ENCODE measurements at regions of chr2 and their contacts with region 1.

Region 1: GRCh38 chr2:17719562-17720371 is 33.8 kb downstream of the SMC6 start:
- DNase-seq: no peak
- ATAC-seq: peak in 2 of 4 donors; percentile 53 to 57
- H3K4me3 ChIP-seq: no peak overlapping the region
- H3K27ac ChIP-seq: no peak overlapping the region
- H3K4me1 ChIP-seq: no peaks in the 10 kb centered on the region
- H3K27me3 ChIP-seq: no peaks in the 10 kb centered on the region
- CTCF ChIP-seq: peak; percentile 36 to 81 (median 70)

Region 2: DNA sequence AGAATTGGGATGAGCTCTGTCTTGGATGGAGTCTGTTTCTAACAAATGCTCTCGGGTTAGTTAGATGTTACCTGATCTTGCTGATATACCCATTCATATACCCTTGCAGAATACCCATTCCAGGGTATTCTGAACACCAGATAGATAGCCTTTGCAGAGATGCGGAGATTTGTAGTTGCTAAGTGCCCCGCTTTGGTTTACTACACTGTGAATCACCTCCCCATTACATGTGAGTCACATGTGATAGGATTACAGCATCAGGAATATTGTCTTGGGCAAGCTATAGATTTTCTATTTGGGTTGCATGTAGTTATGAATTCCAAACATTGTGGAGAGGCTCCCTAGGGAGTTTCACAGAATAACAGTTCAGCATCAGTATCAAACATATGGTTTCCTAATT is 175.5 kb before region 1 on chr2:
- intact Hi-C with region 1: no loop called
- DNase-seq: no peak
- ATAC-seq: no peak
- H3K4me3 ChIP-seq: no peak overlapping the region
- H3K27ac ChIP-seq: no peak overlapping the region
- H3K4me1 ChIP-seq: peaks cover 0 to 3% (median 0%) of the 10 kb centered on the region in 3 donors
- H3K27me3 ChIP-seq: no peaks in the 10 kb centered on the region
- CTCF ChIP-seq: no peak

Region 3: GRCh38 chr2:17830053-17831034 is 110.6 kb after region 1 on chr2:
- intact Hi-C with region 1: loop called in 1 of 3 experiments (anchors 10 kb)
- DNase-seq: peak; percentile 31 to 88 (median 66)
- ATAC-seq: peak; percentile 78 to 97 (median 90)
- H3K4me3 ChIP-seq: peak overlapping the region in 1 of 4 donors; percentile 13
- H3K27ac ChIP-seq: no peak overlapping the region
- H3K4me1 ChIP-seq: peaks cover 0 to 3% (median 0%) of the 10 kb centered on the region in 3 donors
- H3K27me3 ChIP-seq: no peaks in the 10 kb centered on the region
- CTCF ChIP-seq: peak; percentile 70 to 85 (median 75)

Measured in pancreas (tissue), 10 donors.